Dorsolateral prefrontal cortex (tissue), 120 donors: ENCODE measurements at regions of chr21 and their contacts with region 1.

Region 1: GRCh38 chr21:17045214-17045853 is 467.5 kb upstream of the CXADR start:
- DNase-seq: no peak
- H3K4me3 ChIP-seq: no peak overlapping the region
- H3K27ac ChIP-seq: no peak overlapping the region
- H3K27me3 ChIP-seq: no peaks in the 10 kb centered on the region
- CTCF ChIP-seq: peak; percentile 15 to 74 (median 57)

Region 2: GRCh38 chr21:15894596-15894995 is 1150.7 kb before region 1 on chr21:
- intact Hi-C with region 1: loop called in 1 of 2 experiments (anchors 10 kb)
- DNase-seq: no peak
- H3K4me3 ChIP-seq: peak overlapping the region in 2 of 59 donors; percentile 4
- H3K27ac ChIP-seq: no peak overlapping the region
- H3K27me3 ChIP-seq: no peaks in the 10 kb centered on the region
- CTCF ChIP-seq: peak in 54 of 56 donors; percentile 33 to 75 (median 56)